PC-3 (cell line): ENCODE measurements at regions of chr15 and their contacts with region 1.

Region 1: GRCh38 chr15:48800811-48801455 is 9.9 kb downstream of the CEP152 start:
- DNase-seq: peak; percentile 64
- ATAC-seq: peak; percentile 9; the same call in 1 of the 2 replicates
- H3K4me3 ChIP-seq: no peak overlapping the region
- H3K27ac ChIP-seq: 0 out of 2 replicates have a peak overlapping the region, but pooled peaks have one; percentile 5
- H3K4me1 ChIP-seq: peaks cover 36% of the 10 kb centered on the region
- H3K27me3 ChIP-seq: no peaks in the 10 kb centered on the region
- CTCF ChIP-seq: peak; percentile 67

Region 2: GRCh38 chr15:48358229-48358641 is 442.7 kb before region 1 on chr15:
- CTCF ChIA-PET with region 1: no interaction called
- POLR2A ChIA-PET with region 1: no interaction called
- intact Hi-C with region 1: loop called (anchors 2 kb)
- DNase-seq: peak; percentile 49
- ATAC-seq: peak; percentile 73
- H3K4me3 ChIP-seq: peak overlapping the region; percentile 32; the same call in 1 of the 2 replicates
- H3K27ac ChIP-seq: peak overlapping the region; percentile 68
- H3K4me1 ChIP-seq: peaks cover 13% of the 10 kb centered on the region
- H3K27me3 ChIP-seq: no peaks in the 10 kb centered on the region
- CTCF ChIP-seq: peak; percentile 78

Region 3: GRCh38 chr15:48717458-48717857 is 83.5 kb before region 1 on chr15:
- CTCF ChIA-PET with region 1: no interaction called
- POLR2A ChIA-PET with region 1: no interaction called
- intact Hi-C with region 1: loop called (anchors 1 kb)
- DNase-seq: peak; percentile 44
- ATAC-seq: peak; percentile 73
- H3K4me3 ChIP-seq: no peak overlapping the region
- H3K27ac ChIP-seq: no peak overlapping the region
- H3K4me1 ChIP-seq: peaks cover 11% of the 10 kb centered on the region
- H3K27me3 ChIP-seq: no peaks in the 10 kb centered on the region
- CTCF ChIP-seq: peak; percentile 53

Region 4: DNA sequence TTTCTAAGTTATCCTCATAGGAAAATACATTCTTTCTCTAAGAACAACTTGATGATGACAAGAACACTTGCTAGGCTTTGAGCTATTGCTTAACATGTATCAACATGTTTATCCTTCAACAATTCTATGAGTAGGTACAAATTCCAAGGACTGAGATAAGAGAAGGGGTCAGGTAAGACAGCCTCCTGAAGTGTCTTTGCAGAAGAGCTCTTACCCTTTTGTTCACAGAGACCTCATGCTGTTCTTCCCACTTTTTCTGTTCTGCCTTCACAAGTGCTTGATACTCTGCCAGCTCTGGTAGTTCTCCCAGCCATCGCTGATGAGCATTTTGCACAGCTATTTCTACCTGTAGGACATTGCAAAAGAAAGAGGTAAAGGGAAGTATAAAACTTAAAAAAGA is 41.0 kb before region 1 on chr15:
- CTCF ChIA-PET with region 1: interaction called, 3 read pairs
- POLR2A ChIA-PET with region 1: no interaction called
- intact Hi-C with region 1: loop called (anchors 1 kb)
- DNase-seq: no peak
- ATAC-seq: no peak
- H3K4me3 ChIP-seq: no peak overlapping the region
- H3K27ac ChIP-seq: no peak overlapping the region
- H3K4me1 ChIP-seq: no peaks in the 10 kb centered on the region; the same call in 1 of the 2 replicates
- H3K27me3 ChIP-seq: no peaks in the 10 kb centered on the region
- CTCF ChIP-seq: no peak

Region 5: GRCh38 chr15:48781481-48782081 is 19.4 kb before region 1 on chr15:
- CTCF ChIA-PET with region 1: no interaction called
- POLR2A ChIA-PET with region 1: no interaction called
- intact Hi-C with region 1: loop called (anchors 2 kb)
- DNase-seq: peak; percentile 66
- ATAC-seq: peak; percentile 53
- H3K4me3 ChIP-seq: no peak overlapping the region
- H3K27ac ChIP-seq: peak overlapping the region; percentile 92
- H3K4me1 ChIP-seq: peaks cover 25% of the 10 kb centered on the region
- H3K27me3 ChIP-seq: no peaks in the 10 kb centered on the region
- CTCF ChIP-seq: no peak

Region 6: GRCh38 chr15:49452595-49452994 is 651.7 kb after region 1 on chr15:
- CTCF ChIA-PET with region 1: no interaction called
- POLR2A ChIA-PET with region 1: no interaction called
- intact Hi-C with region 1: no loop called
- DNase-seq: no peak
- ATAC-seq: no peak
- H3K4me3 ChIP-seq: no peak overlapping the region
- H3K27ac ChIP-seq: no peak overlapping the region
- H3K4me1 ChIP-seq: no peaks in the 10 kb centered on the region
- H3K27me3 ChIP-seq: no peaks in the 10 kb centered on the region
- CTCF ChIP-seq: no peak

Region 7: GRCh38 chr15:49573421-49573820 is 772.5 kb after region 1 on chr15:
- CTCF ChIA-PET with region 1: no interaction called
- POLR2A ChIA-PET with region 1: no interaction called
- intact Hi-C with region 1: no loop called
- DNase-seq: no peak
- ATAC-seq: no peak
- H3K4me3 ChIP-seq: no peak overlapping the region
- H3K27ac ChIP-seq: no peak overlapping the region
- H3K4me1 ChIP-seq: no peaks in the 10 kb centered on the region
- H3K27me3 ChIP-seq: no peaks in the 10 kb centered on the region
- CTCF ChIP-seq: no peak